ENCODE measurements at regions of chr14 and their contacts with region 1.

Region 1: GRCh38 chr14:39015360-39015961 is 87.6 kb downstream of the SEC23A start:
- DNase-seq: peak; percentile 17
- H3K4me3 Mint-ChIP-seq: no peak overlapping the region
- H3K27ac Mint-ChIP-seq: no peak overlapping the region
- H3K4me1 Mint-ChIP-seq: no peaks in the 10 kb centered on the region
- H3K27me3 Mint-ChIP-seq: no peaks in the 10 kb centered on the region

Region 2: GRCh38 chr14:37903343-37904191 is 1111.9 kb before region 1 on chr14:
- CTCF ChIA-PET with region 1: no interaction called
- POLR2A ChIA-PET with region 1: no interaction called
- intact Hi-C with region 1: loop called (anchors 1 kb)
- DNase-seq: peak; percentile 13
- H3K4me3 Mint-ChIP-seq: no peak overlapping the region
- H3K27ac Mint-ChIP-seq: no peak overlapping the region
- H3K4me1 Mint-ChIP-seq: peaks cover 4% of the 10 kb centered on the region
- H3K27me3 Mint-ChIP-seq: peaks cover 9% of the 10 kb centered on the region

Region 3: GRCh38 chr14:38721822-38722431 is 293.5 kb before region 1 on chr14:
- CTCF ChIA-PET with region 1: interaction called, 8 read pairs
- POLR2A ChIA-PET with region 1: no interaction called
- intact Hi-C with region 1: loop called (anchors 1 kb)
- DNase-seq: peak; percentile 52
- H3K4me3 Mint-ChIP-seq: no peak overlapping the region
- H3K27ac Mint-ChIP-seq: no peak overlapping the region
- H3K4me1 Mint-ChIP-seq: no peaks in the 10 kb centered on the region
- H3K27me3 Mint-ChIP-seq: no peaks in the 10 kb centered on the region

Region 4: GRCh38 chr14:38755036-38755435 is 260.4 kb before region 1 on chr14:
- CTCF ChIA-PET with region 1: no interaction called
- POLR2A ChIA-PET with region 1: no interaction called
- intact Hi-C with region 1: no loop called
- DNase-seq: no peak
- H3K4me3 Mint-ChIP-seq: no peak overlapping the region
- H3K27ac Mint-ChIP-seq: no peak overlapping the region
- H3K4me1 Mint-ChIP-seq: no peaks in the 10 kb centered on the region
- H3K27me3 Mint-ChIP-seq: no peaks in the 10 kb centered on the region

Region 5: DNA sequence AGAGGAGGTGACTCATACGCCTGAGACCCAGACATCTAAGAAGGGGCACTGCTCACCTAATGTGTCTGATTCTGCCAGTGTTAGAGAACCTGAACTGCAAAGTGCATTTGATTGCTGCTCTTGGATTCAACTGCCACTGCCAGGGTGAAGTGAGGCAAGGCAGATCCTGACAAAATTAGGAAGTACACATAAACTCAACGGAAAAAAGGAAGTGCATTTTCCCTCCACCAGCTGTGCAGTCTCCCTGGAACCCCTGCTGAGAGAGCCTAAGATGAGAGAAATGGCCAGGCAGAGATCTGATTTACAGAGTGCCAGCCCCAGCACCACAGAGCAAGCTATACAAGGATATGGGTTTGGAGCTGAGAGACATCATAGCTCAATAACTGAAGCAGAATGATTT is 127.8 kb before region 1 on chr14:
- CTCF ChIA-PET with region 1: no interaction called
- POLR2A ChIA-PET with region 1: no interaction called
- intact Hi-C with region 1: loop called (anchors 10 kb)
- DNase-seq: no peak
- H3K4me3 Mint-ChIP-seq: no peak overlapping the region
- H3K27ac Mint-ChIP-seq: no peak overlapping the region
- H3K4me1 Mint-ChIP-seq: no peaks in the 10 kb centered on the region
- H3K27me3 Mint-ChIP-seq: peaks cover 7% of the 10 kb centered on the region

Region 6: DNA sequence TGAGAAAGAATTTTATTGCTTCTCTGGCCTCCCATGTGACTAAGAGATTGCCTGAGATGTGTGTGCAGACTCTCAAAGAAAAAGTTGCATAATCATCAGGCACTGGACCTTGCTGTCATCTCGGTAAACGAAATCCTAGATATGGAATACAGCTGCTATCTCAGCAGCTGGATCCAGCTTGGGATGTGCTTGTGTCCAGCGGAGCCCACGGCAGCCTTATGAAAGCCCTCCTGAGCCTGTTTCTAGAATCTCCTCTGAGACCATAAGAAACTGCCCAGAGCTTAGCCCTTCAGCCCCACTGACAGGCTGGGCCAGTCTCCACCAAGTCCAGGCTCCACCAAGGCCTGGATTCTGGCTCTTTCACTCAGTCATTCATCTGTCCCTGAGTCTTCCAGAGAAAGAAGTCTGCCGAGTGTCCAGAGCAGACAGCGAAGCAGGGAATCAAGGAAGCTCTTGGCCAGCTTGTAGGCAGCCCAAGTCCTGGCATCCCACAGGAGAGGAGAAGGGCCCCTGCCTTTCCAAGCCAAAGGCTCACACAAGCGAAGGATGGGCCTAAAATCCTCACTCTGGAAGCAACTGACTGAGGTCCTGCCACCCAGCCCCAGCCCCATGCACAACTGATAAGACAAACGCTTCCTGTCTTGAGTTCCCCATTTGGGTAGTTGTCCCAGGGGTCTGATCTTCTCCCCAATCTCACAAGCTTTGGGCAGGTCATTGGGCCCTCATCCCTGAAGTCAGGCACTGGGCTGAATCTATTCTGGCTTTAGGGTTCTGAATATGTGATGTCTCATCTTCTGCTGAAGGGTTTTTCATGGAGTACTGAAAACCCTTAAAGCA is 10.2 kb before region 1 on chr14:
- CTCF ChIA-PET with region 1: interaction called, 11 read pairs
- POLR2A ChIA-PET with region 1: no interaction called
- intact Hi-C with region 1: no loop called
- DNase-seq: no peak
- H3K4me3 Mint-ChIP-seq: no peak overlapping the region
- H3K27ac Mint-ChIP-seq: no peak overlapping the region
- H3K4me1 Mint-ChIP-seq: no peaks in the 10 kb centered on the region
- H3K27me3 Mint-ChIP-seq: peaks cover 5% of the 10 kb centered on the region

Region 7: GRCh38 chr14:39154594-39155189 is 139.2 kb after region 1 on chr14:
- CTCF ChIA-PET with region 1: no interaction called
- POLR2A ChIA-PET with region 1: no interaction called
- intact Hi-C with region 1: no loop called
- DNase-seq: no peak
- H3K4me3 Mint-ChIP-seq: no peak overlapping the region
- H3K27ac Mint-ChIP-seq: no peak overlapping the region
- H3K4me1 Mint-ChIP-seq: peaks cover 3% of the 10 kb centered on the region
- H3K27me3 Mint-ChIP-seq: no peaks in the 10 kb centered on the region